CD4-positive, alpha-beta memory T cell (primary cell): ENCODE measurements at regions of chr7 and their contacts with region 1.

Region 1: GRCh38 chr7:36683695-36684357 is 40.5 kb downstream of the AOAH start:
- DNase-seq: no peak
- H3K4me3 ChIP-seq: no peak overlapping the region
- H3K4me3 Mint-ChIP-seq: no peak overlapping the region
- H3K27ac ChIP-seq: no peak overlapping the region
- H3K27ac Mint-ChIP-seq: peak overlapping the region in 1 of 7 donors; percentile 39
- H3K4me1 ChIP-seq: peaks cover 11% of the 10 kb centered on the region
- H3K4me1 Mint-ChIP-seq: peaks cover 15 to 26% (median 17%) of the 10 kb centered on the region in 4 donors
- H3K27me3 ChIP-seq: no peaks in the 10 kb centered on the region
- H3K27me3 Mint-ChIP-seq: no peaks in the 10 kb centered on the region

Region 2: DNA sequence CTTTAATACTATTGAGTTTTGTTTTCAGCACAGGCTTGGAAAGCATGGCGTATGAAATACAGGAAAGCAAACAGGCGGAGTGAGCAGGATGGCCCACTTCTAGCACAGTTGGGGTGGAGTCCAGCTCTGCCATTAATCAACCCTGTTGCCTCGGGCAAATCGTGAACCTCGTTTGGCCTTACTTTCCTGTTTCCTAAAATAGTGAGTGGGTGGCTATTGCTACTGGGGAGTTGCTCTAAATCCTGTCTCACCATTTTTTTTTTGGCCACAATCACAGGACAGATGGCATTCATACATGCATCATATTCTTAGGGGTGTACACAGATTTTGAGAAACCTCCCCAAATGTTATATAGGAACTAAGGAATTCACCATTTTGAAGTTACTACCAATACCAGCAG is 136.4 kb before region 1 on chr7:
- CTCF ChIA-PET with region 1: no interaction called
- POLR2A ChIA-PET with region 1: no interaction called
- intact Hi-C with region 1: no loop called
- DNase-seq: no peak
- H3K4me3 ChIP-seq: no peak overlapping the region
- H3K4me3 Mint-ChIP-seq: no peak overlapping the region
- H3K27ac ChIP-seq: no peak overlapping the region
- H3K27ac Mint-ChIP-seq: no peak overlapping the region
- H3K4me1 ChIP-seq: no peaks in the 10 kb centered on the region
- H3K4me1 Mint-ChIP-seq: no peaks in the 10 kb centered on the region
- H3K27me3 ChIP-seq: no peaks in the 10 kb centered on the region
- H3K27me3 Mint-ChIP-seq: no peaks in the 10 kb centered on the region

Region 3: GRCh38 chr7:37201003-37201875 is 517.4 kb after region 1 on chr7:
- CTCF ChIA-PET with region 1: interaction called, 14 read pairs
- POLR2A ChIA-PET with region 1: interaction called, 3 read pairs
- intact Hi-C with region 1: no loop called
- DNase-seq: peak in 4 of 5 donors; percentile 10 to 28 (median 25)
- H3K4me3 ChIP-seq: no peak overlapping the region
- H3K4me3 Mint-ChIP-seq: no peak overlapping the region
- H3K27ac ChIP-seq: no peak overlapping the region
- H3K27ac Mint-ChIP-seq: peak overlapping the region in 3 of 7 donors; percentile 5 to 59 (median 22)
- H3K4me1 ChIP-seq: no peaks in the 10 kb centered on the region
- H3K4me1 Mint-ChIP-seq: peaks cover 4 to 12% (median 7%) of the 10 kb centered on the region in 4 donors
- H3K27me3 ChIP-seq: no peaks in the 10 kb centered on the region
- H3K27me3 Mint-ChIP-seq: no peaks in the 10 kb centered on the region